Adrenal gland (tissue), 19 donors: ENCODE measurements at regions of chr17 and their contacts with region 1.

Region 1: GRCh38 chr17:81601525-81602120 is 35.3 kb downstream of the NPLOC4 start:
- DNase-seq: peak in 5 of 7 donors; percentile 38 to 68 (median 56)
- H3K4me3 ChIP-seq: no peak overlapping the region
- H3K27ac ChIP-seq: peak overlapping the region in 1 of 5 donors; percentile 36
- H3K4me1 ChIP-seq: peaks cover 7 to 22% of the 10 kb centered on the region in 2 donors
- H3K27me3 ChIP-seq: no peaks in the 10 kb centered on the region
- CTCF ChIP-seq: peak; percentile 65 to 86 (median 70)
- POLR2A ChIP-seq: no peak

Region 2: DNA sequence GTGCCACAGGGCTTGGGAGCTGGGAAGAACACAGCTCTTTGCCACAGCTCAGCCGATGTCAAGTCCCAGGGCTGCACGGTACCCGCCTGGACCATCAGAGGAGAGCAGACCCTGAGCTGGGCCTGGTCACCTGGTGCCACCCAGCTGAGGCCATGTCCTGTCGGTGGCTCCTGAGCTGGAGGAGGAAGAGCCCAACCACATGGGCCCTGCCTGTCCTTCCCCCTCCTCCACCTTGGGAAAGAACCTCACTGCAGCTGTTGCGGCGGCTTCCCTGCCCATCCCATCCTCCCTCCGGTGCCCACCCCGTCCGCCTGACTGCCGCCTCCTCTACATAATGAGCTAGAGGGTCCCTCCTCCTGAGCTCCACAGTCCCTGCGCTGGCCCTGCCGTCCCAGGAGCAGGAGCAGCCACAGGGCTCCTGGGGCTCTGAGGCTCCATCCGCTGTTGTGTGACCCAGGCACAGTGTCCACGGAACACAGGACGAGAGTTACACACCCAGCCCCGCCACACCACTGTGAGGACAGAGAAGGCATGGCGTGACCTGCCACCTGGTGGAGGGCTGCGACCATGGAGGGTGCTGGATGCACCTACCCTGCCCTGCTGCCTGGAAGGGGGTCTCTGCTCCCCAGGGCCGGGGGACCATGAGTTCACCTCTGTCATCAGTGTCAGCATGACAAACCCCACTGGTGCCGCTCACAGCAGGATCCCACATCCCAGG is 631.4 kb before region 1 on chr17:
- intact Hi-C with region 1: no loop called
- DNase-seq: peak in 2 of 7 donors; percentile 46 to 47
- H3K4me3 ChIP-seq: no peak overlapping the region
- H3K27ac ChIP-seq: no peak overlapping the region
- H3K4me1 ChIP-seq: peaks cover 8 to 13% of the 10 kb centered on the region in 2 donors
- H3K27me3 ChIP-seq: no peaks in the 10 kb centered on the region
- CTCF ChIP-seq: peak in 5 of 6 experiments; percentile 21 to 54 (median 42)
- POLR2A ChIP-seq: no peak

Region 3: DNA sequence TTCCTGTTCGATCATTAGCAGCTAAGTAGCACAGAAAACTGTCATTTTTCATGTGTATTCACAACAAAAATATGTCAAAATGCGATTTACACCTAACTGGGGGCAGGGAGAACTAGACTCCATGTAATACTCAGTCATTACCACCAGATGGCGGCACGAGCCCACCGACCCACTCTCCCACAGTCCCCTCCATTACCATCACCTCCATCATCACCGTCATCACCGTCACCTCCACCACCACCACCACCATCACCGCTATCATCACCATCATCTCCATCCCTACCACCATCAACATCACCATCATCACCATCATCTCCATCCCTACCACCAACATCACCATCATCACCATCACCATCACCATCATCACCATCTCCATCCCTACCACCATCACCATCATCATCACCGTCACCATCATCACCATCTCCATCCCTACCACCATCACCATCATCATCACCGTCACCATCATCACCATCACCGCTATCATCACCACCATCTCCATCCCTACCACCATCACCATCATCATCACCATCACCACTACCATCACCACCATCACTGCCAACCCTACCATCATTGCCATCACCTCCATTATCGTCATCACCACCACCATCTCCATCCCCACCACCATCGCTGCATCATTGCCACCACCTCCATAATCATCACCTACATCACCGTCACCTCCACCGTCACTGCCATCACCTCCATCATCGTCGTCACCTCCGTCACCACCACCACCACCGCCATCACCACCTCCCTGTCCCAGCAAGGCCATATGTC is 348.1 kb before region 1 on chr17:
- intact Hi-C with region 1: loop called in 1 of 2 experiments (anchors 5 kb)
- DNase-seq: peak in 3 of 7 donors; percentile 52 to 81 (median 55)
- H3K4me3 ChIP-seq: no peak overlapping the region
- H3K27ac ChIP-seq: peak overlapping the region in 1 of 5 donors; percentile 59
- H3K4me1 ChIP-seq: peaks cover 0 to 15% of the 10 kb centered on the region in 2 donors
- H3K27me3 ChIP-seq: no peaks in the 10 kb centered on the region
- CTCF ChIP-seq: peak; percentile 65 to 97 (median 84)
- POLR2A ChIP-seq: no peak

Region 4: GRCh38 chr17:81512560-81513371 is 88.9 kb before region 1 on chr17 and contains the start of gene ACTG1:
- intact Hi-C with region 1: loop called (anchors 10 kb)
- DNase-seq: peak; percentile 93 to 97 (median 94)
- H3K4me3 ChIP-seq: peak within 1 kb of the TSS; percentile 48 to 95 (median 88)
- H3K27ac ChIP-seq: peak within 1 kb of the TSS; percentile 86 to 99 (median 88)
- H3K4me1 ChIP-seq: peaks cover 28 to 53% of the 10 kb centered on the region in 2 donors
- H3K27me3 ChIP-seq: no peaks in the 10 kb centered on the region
- CTCF ChIP-seq: no peak
- POLR2A ChIP-seq: peak; percentile 95 to 97
- total RNA-seq, gene ACTG1: 842 to 6,446 (median 2,440) TPM

Region 5: DNA sequence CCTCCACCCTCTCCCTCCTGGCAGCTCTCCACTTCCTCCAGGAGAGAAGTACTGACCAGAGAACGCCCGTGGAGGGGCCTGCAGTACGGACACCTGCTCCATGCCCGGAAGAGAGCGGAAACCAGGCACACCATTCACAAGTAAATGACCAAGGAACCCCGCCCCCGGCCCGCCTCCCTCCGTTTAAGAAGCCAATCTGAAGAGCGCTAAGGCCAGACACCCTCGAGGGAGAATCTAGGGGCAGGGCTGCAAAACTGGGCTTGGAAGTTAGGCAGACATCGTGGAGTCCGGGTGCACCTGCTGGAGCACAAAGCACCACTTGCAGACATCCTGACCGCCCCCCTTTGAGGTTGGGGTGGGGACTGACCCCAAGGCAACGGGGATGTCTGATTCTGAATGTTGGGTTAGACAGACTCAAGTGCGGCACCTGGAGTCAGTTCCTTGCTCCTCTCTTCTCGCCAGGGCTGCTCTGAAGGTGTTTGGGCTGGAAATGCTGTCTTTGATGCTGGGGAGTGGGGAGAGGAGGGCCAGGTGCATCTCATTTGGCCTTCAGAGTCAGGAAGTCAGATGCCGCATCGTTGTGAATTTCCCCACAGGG is 48.5 kb before region 1 on chr17:
- intact Hi-C with region 1: no loop called
- DNase-seq: peak in 6 of 7 donors; percentile 79 to 90 (median 84)
- H3K4me3 ChIP-seq: peak overlapping the region; percentile 12 to 97 (median 76)
- H3K27ac ChIP-seq: peak overlapping the region; percentile 64 to 94 (median 71)
- H3K4me1 ChIP-seq: peaks cover 29 to 39% of the 10 kb centered on the region in 2 donors
- H3K27me3 ChIP-seq: no peaks in the 10 kb centered on the region
- CTCF ChIP-seq: no peak
- POLR2A ChIP-seq: peak in 1 of 2 donors; percentile 43